ENCODE measurements at regions of chr22 and their contacts with region 1.

Region 1: GRCh38 chr22:39170825-39171622 is 18.5 kb upstream of the CBX7 start:
- DNase-seq: peak; percentile 71 to 98 (median 88)
- ATAC-seq: peak; percentile 86 to 93 (median 92)
- H3K4me3 ChIP-seq: no peak overlapping the region
- H3K27ac ChIP-seq: no peak overlapping the region
- H3K4me1 ChIP-seq: peaks cover 8 to 15% (median 14%) of the 10 kb centered on the region in 3 donors
- H3K27me3 ChIP-seq: no peaks in the 10 kb centered on the region
- CTCF ChIP-seq: peak; percentile 92 to 97 (median 94)

Region 2: GRCh38 chr22:39117585-39118191 is 53.3 kb before region 1 on chr22:
- intact Hi-C with region 1: no loop called
- DNase-seq: peak in 3 of 6 donors; percentile 39 to 55 (median 54)
- ATAC-seq: peak in 3 of 4 donors; percentile 69 to 84 (median 71)
- H3K4me3 ChIP-seq: no peak overlapping the region
- H3K27ac ChIP-seq: no peak overlapping the region
- H3K4me1 ChIP-seq: no peaks in the 10 kb centered on the region
- H3K27me3 ChIP-seq: peaks cover 0 to 3% (median 0%) of the 10 kb centered on the region in 4 donors
- CTCF ChIP-seq: peak in 3 of 4 donors; percentile 18 to 27 (median 23)

Region 3: GRCh38 chr22:39236321-39237317 is 65.6 kb after region 1 on chr22:
- intact Hi-C with region 1: loop called in 1 of 3 experiments (anchors 10 kb)
- DNase-seq: peak in 2 of 6 donors; percentile 31 to 52
- ATAC-seq: no peak
- H3K4me3 ChIP-seq: no peak overlapping the region
- H3K27ac ChIP-seq: no peak overlapping the region
- H3K4me1 ChIP-seq: peaks cover 13 to 39% (median 33%) of the 10 kb centered on the region in 3 donors
- H3K27me3 ChIP-seq: no peaks in the 10 kb centered on the region
- CTCF ChIP-seq: no peak

Region 4: GRCh38 chr22:39306581-39307361 is 135.7 kb after region 1 on chr22:
- intact Hi-C with region 1: loop called (anchors 2 to 10 kb)
- DNase-seq: peak in 2 of 6 donors; percentile 54 to 71
- ATAC-seq: peak in 1 of 4 donors; percentile 51
- H3K4me3 ChIP-seq: no peak overlapping the region
- H3K27ac ChIP-seq: no peak overlapping the region
- H3K4me1 ChIP-seq: no peaks in the 10 kb centered on the region
- H3K27me3 ChIP-seq: no peaks in the 10 kb centered on the region
- CTCF ChIP-seq: peak in 2 of 4 donors; percentile 9 to 22

Region 5: GRCh38 chr22:39520054-39520891 is 349.2 kb after region 1 on chr22 and contains the start of gene ATF4:
- intact Hi-C with region 1: loop called in 1 of 3 experiments (anchors 10 kb)
- DNase-seq: peak; percentile 95 to 99 (median 98)
- ATAC-seq: peak; percentile 85 to 93 (median 86)
- H3K4me3 ChIP-seq: peak within 1 kb of the TSS; percentile 97 to 100 (median 99)
- H3K27ac ChIP-seq: peak within 1 kb of the TSS; percentile 94 to 99 (median 97)
- H3K4me1 ChIP-seq: peaks cover 3 to 22% (median 7%) of the 10 kb centered on the region in 3 donors
- H3K27me3 ChIP-seq: no peaks in the 10 kb centered on the region
- CTCF ChIP-seq: no peak
- total RNA-seq, gene ATF4: 155 to 472 (median 217) TPM

Measured in pancreas (tissue), 10 donors.